CD4-positive, alpha-beta memory T cell (primary cell): ENCODE measurements at regions of chr14 and their contacts with region 1.

Region 1: DNA sequence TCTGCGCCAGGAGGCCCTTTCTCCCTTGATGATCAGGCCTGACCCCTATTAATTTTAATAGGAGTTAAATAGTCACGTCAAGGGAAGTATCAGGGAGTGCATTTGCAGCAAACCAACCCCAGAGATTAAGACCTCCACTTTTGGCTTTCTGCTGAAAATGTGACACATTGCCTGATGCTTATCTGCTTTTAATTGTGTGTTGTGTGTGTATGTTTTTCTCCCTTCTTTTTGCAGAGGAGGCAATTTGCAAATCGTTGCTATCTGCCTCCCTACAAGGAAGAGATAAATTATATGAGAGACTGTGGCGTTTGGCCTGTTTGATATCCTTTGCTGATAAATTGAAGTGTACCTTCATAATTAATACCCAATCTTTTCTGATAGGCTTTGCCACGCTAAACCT is 822.9 kb downstream of the VRK1 start:
- DNase-seq: peak in 1 of 5 donors; percentile 33
- H3K4me3 ChIP-seq: peak overlapping the region in 1 of 2 donors; percentile 26
- H3K4me3 Mint-ChIP-seq: peak overlapping the region; percentile 60 to 94 (median 85)
- H3K27ac ChIP-seq: peak overlapping the region; percentile 73
- H3K27ac Mint-ChIP-seq: peak overlapping the region; percentile 89 to 99 (median 97)
- H3K4me1 ChIP-seq: peaks cover 45% of the 10 kb centered on the region
- H3K4me1 Mint-ChIP-seq: peaks cover 44 to 67% (median 47%) of the 10 kb centered on the region in 4 donors
- H3K27me3 ChIP-seq: no peaks in the 10 kb centered on the region
- H3K27me3 Mint-ChIP-seq: no peaks in the 10 kb centered on the region

Region 2: GRCh38 chr14:97634751-97635150 is 14.7 kb after region 1 on chr14:
- CTCF ChIA-PET with region 1: no interaction called
- POLR2A ChIA-PET with region 1: interaction called, 12 read pairs
- intact Hi-C with region 1: no loop called
- DNase-seq: peak; percentile 19 to 38 (median 37)
- H3K4me3 ChIP-seq: peak overlapping the region in 1 of 2 donors; percentile 44
- H3K4me3 Mint-ChIP-seq: peak overlapping the region; percentile 70 to 91 (median 86)
- H3K27ac ChIP-seq: no peak overlapping the region
- H3K27ac Mint-ChIP-seq: peak overlapping the region; percentile 39 to 90 (median 81)
- H3K4me1 ChIP-seq: peaks cover 11% of the 10 kb centered on the region
- H3K4me1 Mint-ChIP-seq: peaks cover 25 to 50% (median 35%) of the 10 kb centered on the region in 4 donors
- H3K27me3 ChIP-seq: no peaks in the 10 kb centered on the region
- H3K27me3 Mint-ChIP-seq: peaks cover 0 to 3% of the 10 kb centered on the region in 2 donors

Region 3: GRCh38 chr14:97707603-97708002 is 87.5 kb after region 1 on chr14:
- CTCF ChIA-PET with region 1: no interaction called
- POLR2A ChIA-PET with region 1: interaction called, 10 read pairs
- intact Hi-C with region 1: loop called (anchors 5 kb)
- DNase-seq: peak; percentile 24 to 36 (median 28)
- H3K4me3 ChIP-seq: no peak overlapping the region
- H3K4me3 Mint-ChIP-seq: peak overlapping the region in 7 of 8 donors; percentile 25 to 88 (median 68)
- H3K27ac ChIP-seq: no peak overlapping the region
- H3K27ac Mint-ChIP-seq: peak overlapping the region; percentile 5 to 85 (median 74)
- H3K4me1 ChIP-seq: peaks cover 84% of the 10 kb centered on the region
- H3K4me1 Mint-ChIP-seq: peaks cover 79 to 100% (median 90%) of the 10 kb centered on the region in 4 donors
- H3K27me3 ChIP-seq: no peaks in the 10 kb centered on the region
- H3K27me3 Mint-ChIP-seq: no peaks in the 10 kb centered on the region

Region 4: DNA sequence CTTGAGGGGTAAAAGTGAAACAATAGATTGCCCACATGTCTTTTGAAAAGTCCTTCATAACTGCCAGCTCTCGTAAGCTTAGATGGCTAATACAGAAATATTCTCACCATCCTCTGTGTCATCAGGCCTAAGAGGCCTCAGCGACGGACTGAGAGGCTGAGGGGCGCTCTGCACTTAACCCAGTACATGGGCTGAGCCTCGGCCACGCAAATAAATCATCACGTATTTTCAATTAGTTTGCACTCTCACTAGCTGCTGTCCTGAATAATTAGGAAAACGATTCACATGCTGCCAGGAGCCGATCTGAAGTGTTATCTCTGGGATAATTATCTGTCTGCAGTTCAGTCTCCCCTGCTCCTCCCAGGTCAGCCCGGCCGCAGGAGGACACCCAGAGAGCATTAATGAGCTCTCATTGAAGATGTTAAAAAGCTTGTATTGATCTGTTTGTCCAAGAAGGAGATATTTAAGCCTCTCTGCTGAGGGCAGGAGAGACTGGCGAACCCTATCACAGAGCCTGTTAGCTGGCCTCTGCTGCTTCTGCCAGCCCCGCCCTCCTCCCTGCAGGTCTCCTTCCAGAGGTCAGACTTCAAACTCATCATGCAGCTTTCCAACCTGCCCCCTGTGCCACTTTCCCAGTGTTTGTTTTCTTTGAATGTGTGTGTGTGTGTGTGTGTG is 228.4 kb after region 1 on chr14:
- CTCF ChIA-PET with region 1: no interaction called
- POLR2A ChIA-PET with region 1: no interaction called
- intact Hi-C with region 1: no loop called
- DNase-seq: no peak
- H3K4me3 ChIP-seq: no peak overlapping the region
- H3K4me3 Mint-ChIP-seq: no peak overlapping the region
- H3K27ac ChIP-seq: no peak overlapping the region
- H3K27ac Mint-ChIP-seq: no peak overlapping the region
- H3K4me1 ChIP-seq: no peaks in the 10 kb centered on the region
- H3K4me1 Mint-ChIP-seq: no peaks in the 10 kb centered on the region
- H3K27me3 ChIP-seq: no peaks in the 10 kb centered on the region
- H3K27me3 Mint-ChIP-seq: peaks cover 0 to 2% of the 10 kb centered on the region in 2 donors